Upper lobe of right lung (tissue), 1 donor: ENCODE measurements at regions of chr1 and their contacts with region 1.

Region 1: DNA sequence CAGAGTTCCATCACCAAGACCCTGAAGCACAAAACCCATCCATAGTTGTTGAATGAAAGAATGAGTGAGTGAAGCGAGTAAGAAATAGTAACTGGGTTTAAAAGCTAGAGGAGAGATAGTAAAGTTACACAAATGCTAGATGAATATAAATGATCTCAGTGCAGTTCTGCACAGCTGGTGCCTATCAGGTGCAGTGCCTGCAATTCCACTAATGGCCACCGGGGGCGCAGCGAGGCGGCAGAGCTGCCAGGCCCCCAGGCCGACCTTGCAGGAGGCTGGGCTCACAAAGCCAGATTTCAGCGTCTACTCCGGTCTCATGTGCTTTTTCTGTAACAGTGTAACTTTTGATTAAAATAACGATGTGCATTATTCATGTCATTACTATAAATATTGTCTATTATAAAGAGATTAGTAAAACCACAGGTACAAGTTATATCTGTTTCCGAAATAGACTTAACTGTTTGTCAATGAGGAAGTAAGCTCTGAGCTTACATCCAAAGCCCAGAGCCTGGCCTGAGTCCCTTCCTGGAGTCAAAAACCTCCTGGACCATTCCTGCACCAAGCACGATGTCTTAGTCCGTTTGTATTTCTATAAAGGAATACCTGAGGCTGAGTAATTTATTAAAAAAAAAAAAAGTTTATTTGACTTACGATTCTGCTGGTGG is 477.6 kb downstream of the NPHP4 start:
- DNase-seq: peak; percentile 87
- ATAC-seq: peak; percentile 81
- H3K4me3 ChIP-seq: no peak overlapping the region
- H3K27ac ChIP-seq: no peak overlapping the region
- H3K4me1 ChIP-seq: no peaks in the 10 kb centered on the region
- H3K27me3 ChIP-seq: peaks cover 9% of the 10 kb centered on the region
- CTCF ChIP-seq: peak; percentile 100

Region 2: GRCh38 chr1:5745776-5746610 is 231.3 kb after region 1 on chr1:
- intact Hi-C with region 1: loop called (anchors 10 kb)
- DNase-seq: peak; percentile 82
- ATAC-seq: peak; percentile 82
- H3K4me3 ChIP-seq: no peak overlapping the region
- H3K27ac ChIP-seq: no peak overlapping the region
- H3K4me1 ChIP-seq: no peaks in the 10 kb centered on the region
- H3K27me3 ChIP-seq: peaks cover 12% of the 10 kb centered on the region
- CTCF ChIP-seq: peak; percentile 88

Region 3: GRCh38 chr1:5915587-5916571 is 401.2 kb after region 1 on chr1:
- intact Hi-C with region 1: no loop called
- DNase-seq: no peak
- ATAC-seq: peak; percentile 42
- H3K4me3 ChIP-seq: no peak overlapping the region
- H3K27ac ChIP-seq: no peak overlapping the region
- H3K4me1 ChIP-seq: no peaks in the 10 kb centered on the region
- H3K27me3 ChIP-seq: no peaks in the 10 kb centered on the region
- CTCF ChIP-seq: peak; percentile 66